CD14-positive monocyte (primary cell): ENCODE measurements at regions of chr9 and their contacts with region 1.

Region 1: GRCh38 chr9:34437006-34437925 is 21.1 kb downstream of the FAM219A start:
- DNase-seq: peak; percentile 49 to 61 (median 60)
- H3K4me3 ChIP-seq: no peak overlapping the region
- H3K4me3 Mint-ChIP-seq: no peak overlapping the region
- H3K27ac ChIP-seq: no peak overlapping the region
- H3K27ac Mint-ChIP-seq: no peak overlapping the region
- H3K4me1 ChIP-seq: no peaks in the 10 kb centered on the region
- H3K4me1 Mint-ChIP-seq: peaks cover 7% of the 10 kb centered on the region
- H3K27me3 ChIP-seq: no peaks in the 10 kb centered on the region
- H3K27me3 Mint-ChIP-seq: peaks cover 0 to 6% (median 4%) of the 10 kb centered on the region in 3 donors
- CTCF ChIP-seq: peak; percentile 80

Region 2: GRCh38 chr9:34500623-34501267 is 63.5 kb after region 1 on chr9:
- intact Hi-C with region 1: loop called (anchors 1 to 2 kb)
- DNase-seq: peak; percentile 26 to 67 (median 50)
- H3K4me3 ChIP-seq: no peak overlapping the region
- H3K4me3 Mint-ChIP-seq: no peak overlapping the region
- H3K27ac ChIP-seq: no peak overlapping the region
- H3K27ac Mint-ChIP-seq: no peak overlapping the region
- H3K4me1 ChIP-seq: no peaks in the 10 kb centered on the region
- H3K4me1 Mint-ChIP-seq: peaks cover 2% of the 10 kb centered on the region
- H3K27me3 ChIP-seq: no peaks in the 10 kb centered on the region
- H3K27me3 Mint-ChIP-seq: peaks cover 3 to 11% (median 3%) of the 10 kb centered on the region in 3 donors
- CTCF ChIP-seq: peak; percentile 98

Region 3: GRCh38 chr9:34603610-34604231 is 166.5 kb after region 1 on chr9:
- intact Hi-C with region 1: loop called (anchors 5 to 10 kb)
- DNase-seq: peak; percentile 49 to 71 (median 68)
- H3K4me3 ChIP-seq: no peak overlapping the region
- H3K4me3 Mint-ChIP-seq: no peak overlapping the region
- H3K27ac ChIP-seq: no peak overlapping the region
- H3K27ac Mint-ChIP-seq: no peak overlapping the region
- H3K4me1 ChIP-seq: no peaks in the 10 kb centered on the region
- H3K4me1 Mint-ChIP-seq: no peaks in the 10 kb centered on the region
- H3K27me3 ChIP-seq: peaks cover 0 to 2% of the 10 kb centered on the region in 2 donors
- H3K27me3 Mint-ChIP-seq: peaks cover 11 to 14% (median 14%) of the 10 kb centered on the region in 3 donors
- CTCF ChIP-seq: peak; percentile 91

Region 4: GRCh38 chr9:35481347-35481975 is 1044.2 kb after region 1 on chr9:
- intact Hi-C with region 1: no loop called
- DNase-seq: peak; percentile 38 to 54 (median 40)
- H3K4me3 ChIP-seq: no peak overlapping the region
- H3K4me3 Mint-ChIP-seq: no peak overlapping the region
- H3K27ac ChIP-seq: no peak overlapping the region
- H3K27ac Mint-ChIP-seq: peak overlapping the region in 2 of 7 donors; percentile 42 to 61
- H3K4me1 ChIP-seq: no peaks in the 10 kb centered on the region
- H3K4me1 Mint-ChIP-seq: no peaks in the 10 kb centered on the region
- H3K27me3 ChIP-seq: peaks cover 0 to 3% of the 10 kb centered on the region in 2 donors
- H3K27me3 Mint-ChIP-seq: peaks cover 0 to 6% (median 2%) of the 10 kb centered on the region in 3 donors
- CTCF ChIP-seq: peak; percentile 77